ENCODE measurements at regions of chr3 and their contacts with region 1.

Region 1: DNA sequence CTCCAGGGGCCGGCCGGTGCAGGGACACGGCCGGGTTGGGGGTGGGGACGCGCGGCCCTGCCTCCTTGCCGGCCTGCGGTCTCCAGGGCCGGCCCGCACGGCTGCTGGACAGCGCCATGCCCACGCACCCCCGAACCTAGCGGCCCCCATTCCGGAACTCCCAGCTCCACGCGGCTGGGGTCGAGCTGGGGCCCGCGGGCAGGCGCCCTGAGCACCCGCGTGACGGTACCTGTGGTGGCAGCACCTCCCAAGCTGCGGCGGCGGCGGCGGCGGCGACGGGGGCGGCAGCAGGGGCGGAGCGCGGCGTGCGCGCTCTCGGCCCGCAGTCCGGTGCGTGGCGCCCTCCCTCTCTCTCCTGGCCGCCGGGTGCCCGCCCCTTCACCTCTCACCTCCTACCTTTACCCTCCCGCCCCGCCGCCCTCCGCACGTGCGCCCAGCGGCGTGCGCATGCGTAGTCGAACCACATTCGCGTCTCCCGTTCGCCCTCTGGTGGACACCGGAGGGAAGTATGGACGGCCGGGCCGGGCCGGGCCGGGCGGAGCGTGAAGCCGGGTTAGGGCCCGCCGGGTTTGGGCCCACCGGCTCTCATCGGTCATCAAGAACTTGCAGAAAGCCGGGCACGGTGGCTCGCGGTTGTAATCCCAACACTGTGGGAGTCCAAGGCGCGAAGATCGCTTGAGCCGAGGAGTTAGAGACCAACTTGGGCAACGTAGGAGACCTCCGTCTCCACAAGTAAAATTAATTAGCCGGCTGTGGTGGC is at the start of gene SCAP:
- DNase-seq: peak; percentile 92 to 93
- H3K4me3 ChIP-seq: peak within 1 kb of the TSS; percentile 50 to 99
- H3K27ac ChIP-seq: peak within 1 kb of the TSS; percentile 79 to 93
- H3K4me1 ChIP-seq: peaks cover 4 to 6% of the 10 kb centered on the region in 2 donors
- H3K27me3 ChIP-seq: no peaks in the 10 kb centered on the region
- CTCF ChIP-seq: peak; percentile 98 to 99 (median 98)
- POLR2A ChIP-seq: peak; percentile 54 to 62
- total RNA-seq, gene SCAP: 28.7 to 93.0 (median 48.3) TPM

Region 2: GRCh38 chr3:47250309-47251060 is 225.3 kb before region 1 on chr3:
- intact Hi-C with region 1: no loop called
- DNase-seq: peak in 1 of 2 donors; percentile 26
- H3K4me3 ChIP-seq: no peak overlapping the region
- H3K27ac ChIP-seq: no peak overlapping the region
- H3K4me1 ChIP-seq: no peaks in the 10 kb centered on the region
- H3K27me3 ChIP-seq: no peaks in the 10 kb centered on the region
- CTCF ChIP-seq: peak in 2 of 4 experiments; percentile 15 to 23
- POLR2A ChIP-seq: no peak

Region 3: DNA sequence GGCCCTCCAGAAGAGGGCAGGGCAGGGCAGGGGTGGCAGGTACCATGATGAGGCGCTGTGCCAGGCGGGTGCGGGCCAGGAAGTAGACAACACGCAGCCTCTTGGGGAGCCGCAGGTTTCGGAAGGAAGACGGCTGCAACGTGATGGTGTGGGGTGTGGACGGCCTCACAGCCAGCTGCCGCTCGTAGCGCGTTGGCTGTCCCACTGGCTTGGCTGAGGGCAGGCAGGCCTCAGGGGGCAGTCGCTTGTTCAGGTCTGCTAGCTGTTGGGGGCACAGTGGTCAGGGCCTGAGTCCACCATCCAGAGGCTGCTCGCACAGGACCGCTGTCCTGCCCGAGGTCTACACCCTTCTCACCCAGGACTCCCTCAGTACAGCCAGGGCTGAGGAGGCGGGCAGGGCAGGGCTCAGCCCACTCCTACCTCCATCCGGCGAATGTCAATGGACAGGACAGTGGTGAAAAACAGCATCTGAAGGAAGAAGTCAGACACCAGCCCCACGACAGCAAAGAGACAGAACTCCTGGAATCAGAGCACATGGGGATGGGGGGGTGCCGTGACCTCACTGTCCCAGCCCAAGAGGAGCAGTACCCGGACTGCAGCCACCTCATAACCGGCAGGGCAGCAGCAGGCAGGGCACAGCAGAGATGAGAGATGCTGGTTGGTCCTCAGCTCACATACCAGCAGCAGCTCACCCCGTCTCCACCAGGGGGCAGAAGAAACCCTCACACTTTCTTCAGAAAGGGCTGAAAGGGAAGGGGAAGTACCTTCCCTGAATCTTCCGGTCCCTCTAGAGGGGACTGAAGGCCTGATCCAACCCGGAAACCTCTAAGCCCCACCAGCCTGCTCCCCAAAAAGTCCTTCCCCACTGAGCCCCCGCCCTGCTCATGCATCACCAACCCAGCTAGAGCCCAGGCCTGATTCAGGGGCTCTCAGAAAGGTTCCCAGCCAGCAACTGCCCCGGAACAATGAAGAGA is 55.0 kb before region 1 on chr3:
- intact Hi-C with region 1: loop called (anchors 2 kb)
- DNase-seq: peak; percentile 86
- H3K4me3 ChIP-seq: no peak overlapping the region
- H3K27ac ChIP-seq: peak overlapping the region; percentile 56 to 64
- H3K4me1 ChIP-seq: no peaks in the 10 kb centered on the region
- H3K27me3 ChIP-seq: no peaks in the 10 kb centered on the region
- CTCF ChIP-seq: peak; percentile 79 to 89 (median 87)
- POLR2A ChIP-seq: no peak